Upper lobe of right lung (tissue), 1 donor: ENCODE measurements at regions of chr15 and their contacts with region 1.

Region 1: GRCh38 chr15:94844538-94845389 is 613.4 kb downstream of the MCTP2 start:
- DNase-seq: peak; percentile 87
- ATAC-seq: peak; percentile 87
- H3K4me3 ChIP-seq: peak overlapping the region; percentile 45
- H3K27ac ChIP-seq: peak overlapping the region; percentile 85
- H3K4me1 ChIP-seq: no peaks in the 10 kb centered on the region
- H3K27me3 ChIP-seq: no peaks in the 10 kb centered on the region
- CTCF ChIP-seq: peak; percentile 25

Region 2: GRCh38 chr15:96316953-96317629 is 1472.3 kb after region 1 on chr15:
- intact Hi-C with region 1: loop called (anchors 10 kb)
- DNase-seq: no peak
- ATAC-seq: no peak
- H3K4me3 ChIP-seq: peak overlapping the region; percentile 26
- H3K27ac ChIP-seq: peak overlapping the region; percentile 59
- H3K4me1 ChIP-seq: no peaks in the 10 kb centered on the region
- H3K27me3 ChIP-seq: peaks cover 25% of the 10 kb centered on the region
- CTCF ChIP-seq: no peak